Activated naive CD4-positive, alpha-beta T cell treated with anti-CD3 and anti-CD28 coated beads, Interleukin-2, amount 10 ng/mL, durations not matched to agents 7 days and 5 days (primary cell): ENCODE measurements at regions of chr6 and their contacts with region 1.

Region 1: GRCh38 chr6:116100419-116101301 is at the start of gene NT5DC1:
- DNase-seq: peak; percentile 89
- H3K4me3 Mint-ChIP-seq: peak within 1 kb of the TSS; percentile 88
- H3K27ac Mint-ChIP-seq: peak within 1 kb of the TSS; percentile 89
- H3K4me1 Mint-ChIP-seq: peaks cover 47% of the 10 kb centered on the region
- H3K27me3 Mint-ChIP-seq: no peaks in the 10 kb centered on the region

Region 2: GRCh38 chr6:116010790-116011401 is 89.8 kb before region 1 on chr6:
- CTCF ChIA-PET with region 1: interaction called, 36 read pairs
- DNase-seq: peak; percentile 57
- H3K4me3 Mint-ChIP-seq: no peak overlapping the region
- H3K27ac Mint-ChIP-seq: no peak overlapping the region
- H3K4me1 Mint-ChIP-seq: no peaks in the 10 kb centered on the region
- H3K27me3 Mint-ChIP-seq: no peaks in the 10 kb centered on the region

Region 3: GRCh38 chr6:116111552-116112528 is 11.2 kb after region 1 on chr6:
- CTCF ChIA-PET with region 1: interaction called, 29 read pairs
- DNase-seq: peak; percentile 56
- H3K4me3 Mint-ChIP-seq: no peak overlapping the region
- H3K27ac Mint-ChIP-seq: no peak overlapping the region
- H3K4me1 Mint-ChIP-seq: no peaks in the 10 kb centered on the region
- H3K27me3 Mint-ChIP-seq: no peaks in the 10 kb centered on the region